A673 (cell line): ENCODE measurements at regions of chr4 and their contacts with region 1.

Region 1: GRCh38 chr4:78864405-78865024 is 74.7 kb downstream of the PAQR3 start:
- DNase-seq: peak; percentile 66
- H3K4me3 ChIP-seq: no peak overlapping the region
- H3K27ac ChIP-seq: no peak overlapping the region
- H3K4me1 ChIP-seq: no peaks in the 10 kb centered on the region
- H3K27me3 ChIP-seq: no peaks in the 10 kb centered on the region
- CTCF ChIP-seq: peak; percentile 63

Region 2: GRCh38 chr4:77827343-77827742 is 1037.2 kb before region 1 on chr4:
- CTCF ChIA-PET with region 1: no interaction called
- POLR2A ChIA-PET with region 1: no interaction called
- intact Hi-C with region 1: no loop called
- DNase-seq: no peak
- H3K4me3 ChIP-seq: no peak overlapping the region
- H3K27ac ChIP-seq: no peak overlapping the region
- H3K4me1 ChIP-seq: no peaks in the 10 kb centered on the region
- H3K27me3 ChIP-seq: no peaks in the 10 kb centered on the region
- CTCF ChIP-seq: no peak

Region 3: GRCh38 chr4:77959566-77960338 is 904.8 kb before region 1 on chr4:
- CTCF ChIA-PET with region 1: no interaction called
- POLR2A ChIA-PET with region 1: no interaction called
- intact Hi-C with region 1: loop called (anchors 5 kb)
- DNase-seq: peak; percentile 38
- H3K4me3 ChIP-seq: no peak overlapping the region
- H3K27ac ChIP-seq: no peak overlapping the region
- H3K4me1 ChIP-seq: no peaks in the 10 kb centered on the region
- H3K27me3 ChIP-seq: no peaks in the 10 kb centered on the region
- CTCF ChIP-seq: peak; percentile 55

Region 4: DNA sequence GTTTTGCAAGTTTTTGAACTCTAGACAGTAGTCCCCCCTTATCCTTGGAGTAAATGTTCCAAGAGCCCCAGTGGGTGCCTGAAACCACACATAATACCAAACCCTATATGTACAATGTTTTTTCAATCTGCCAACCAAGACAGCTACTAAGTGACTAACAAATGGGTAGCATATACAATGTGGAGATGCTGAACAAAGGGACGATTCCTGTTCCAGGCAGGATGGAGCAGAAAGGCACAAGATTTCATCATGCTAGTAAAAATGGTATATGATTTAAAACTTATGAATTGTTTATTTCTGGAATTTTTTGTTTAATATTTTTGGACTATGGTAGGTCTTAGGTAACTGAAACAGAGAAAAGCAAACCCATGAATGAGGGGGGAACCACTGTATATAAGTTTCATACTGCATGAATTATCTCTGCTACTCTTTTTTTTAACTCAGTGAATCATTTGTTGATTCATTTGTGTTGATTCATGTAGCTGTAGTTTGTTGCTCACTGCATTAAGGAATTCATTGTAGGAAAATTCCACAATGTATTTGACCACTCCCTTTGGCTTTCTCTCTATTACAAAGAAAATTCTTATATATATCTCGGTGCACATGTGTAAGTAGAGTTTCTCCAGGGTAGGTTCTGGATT is 334.8 kb before region 1 on chr4:
- CTCF ChIA-PET with region 1: no interaction called
- POLR2A ChIA-PET with region 1: no interaction called
- intact Hi-C with region 1: loop called (anchors 10 kb)
- DNase-seq: no peak
- H3K4me3 ChIP-seq: no peak overlapping the region
- H3K27ac ChIP-seq: no peak overlapping the region
- H3K4me1 ChIP-seq: no peaks in the 10 kb centered on the region
- H3K27me3 ChIP-seq: no peaks in the 10 kb centered on the region
- CTCF ChIP-seq: no peak

Region 5: DNA sequence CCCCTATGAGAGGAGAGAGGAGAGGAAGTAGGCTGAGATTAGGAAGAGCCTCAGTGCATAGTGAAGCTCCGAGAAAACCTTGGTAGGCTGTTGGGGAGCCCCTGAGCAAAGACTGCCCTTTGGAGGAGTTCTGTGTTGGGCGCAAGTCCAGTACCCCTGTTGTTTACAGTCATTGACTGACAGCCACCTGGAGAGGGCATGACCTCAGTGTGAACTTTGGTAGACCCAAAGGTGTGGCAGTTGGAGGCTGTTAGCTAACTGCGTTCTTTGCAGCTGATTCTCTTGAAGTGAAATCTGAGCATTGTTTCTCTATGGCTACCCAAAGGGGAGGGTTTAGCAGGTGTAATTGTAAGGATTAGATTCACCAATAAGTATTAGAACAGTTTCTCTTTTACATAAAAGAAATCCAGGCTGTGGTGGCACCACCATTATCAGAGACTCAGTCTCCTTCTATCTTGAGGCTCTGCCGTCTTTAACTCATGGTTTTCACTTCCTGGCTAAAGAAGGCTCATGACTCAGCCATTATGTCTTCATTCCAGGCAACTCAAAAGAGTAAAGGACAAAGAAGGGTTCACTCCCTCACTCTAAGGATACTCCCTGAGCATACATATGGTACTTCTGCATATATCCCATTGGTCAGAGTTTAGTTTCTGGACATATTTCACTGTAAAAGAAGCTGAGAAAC is 279.5 kb before region 1 on chr4:
- CTCF ChIA-PET with region 1: no interaction called
- POLR2A ChIA-PET with region 1: no interaction called
- intact Hi-C with region 1: no loop called
- DNase-seq: no peak
- H3K4me3 ChIP-seq: no peak overlapping the region
- H3K27ac ChIP-seq: no peak overlapping the region
- H3K4me1 ChIP-seq: peaks cover 8% of the 10 kb centered on the region
- H3K27me3 ChIP-seq: no peaks in the 10 kb centered on the region
- CTCF ChIP-seq: no peak

Region 6: DNA sequence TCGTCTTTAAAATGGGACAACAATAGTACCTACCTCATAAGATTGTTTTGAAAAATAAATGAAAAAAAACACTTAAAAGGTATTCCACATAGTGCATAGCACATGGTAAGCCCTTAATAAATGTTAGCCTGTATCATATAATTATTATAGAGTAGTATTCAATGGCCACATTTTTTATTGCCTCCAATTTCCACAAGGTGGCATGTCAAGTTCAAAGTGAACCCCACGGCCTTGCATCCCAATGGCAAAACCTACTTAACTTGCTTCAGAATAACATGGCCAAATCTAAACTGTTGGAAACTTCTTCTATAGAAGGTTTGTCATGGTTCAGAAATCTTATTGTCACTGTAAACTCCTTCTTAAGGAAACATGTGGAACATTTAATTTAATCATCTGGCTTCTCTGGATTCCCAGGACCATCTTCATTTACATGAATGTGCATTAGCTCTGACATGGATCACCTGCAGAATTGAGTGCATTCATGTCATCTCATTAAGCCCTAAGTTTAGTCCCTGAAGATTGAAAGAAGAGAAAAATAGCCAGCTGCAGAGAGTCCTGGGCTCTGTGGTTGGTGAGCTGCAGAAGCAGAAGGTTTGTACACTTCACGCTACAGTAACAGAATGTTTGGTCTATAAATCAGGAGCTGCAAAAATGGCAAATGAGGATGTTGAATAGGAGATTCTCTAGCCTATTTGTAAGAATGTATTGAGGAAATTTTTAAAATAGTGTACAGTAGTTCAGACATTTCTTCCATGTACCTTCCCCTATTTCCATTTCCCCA is 251.9 kb before region 1 on chr4:
- CTCF ChIA-PET with region 1: interaction called, 3 read pairs
- POLR2A ChIA-PET with region 1: no interaction called
- intact Hi-C with region 1: loop called (anchors 5 kb)
- DNase-seq: peak; percentile 46
- H3K4me3 ChIP-seq: no peak overlapping the region
- H3K27ac ChIP-seq: no peak overlapping the region
- H3K4me1 ChIP-seq: peaks cover 14% of the 10 kb centered on the region
- H3K27me3 ChIP-seq: no peaks in the 10 kb centered on the region
- CTCF ChIP-seq: peak; percentile 47

Region 7: GRCh38 chr4:78644744-78645330 is 219.7 kb before region 1 on chr4:
- CTCF ChIA-PET with region 1: no interaction called
- POLR2A ChIA-PET with region 1: no interaction called
- intact Hi-C with region 1: loop called (anchors 10 kb)
- DNase-seq: peak; percentile 67
- H3K4me3 ChIP-seq: no peak overlapping the region
- H3K27ac ChIP-seq: peak overlapping the region; percentile 84
- H3K4me1 ChIP-seq: peaks cover 22% of the 10 kb centered on the region
- H3K27me3 ChIP-seq: no peaks in the 10 kb centered on the region
- CTCF ChIP-seq: peak; percentile 60

Region 8: DNA sequence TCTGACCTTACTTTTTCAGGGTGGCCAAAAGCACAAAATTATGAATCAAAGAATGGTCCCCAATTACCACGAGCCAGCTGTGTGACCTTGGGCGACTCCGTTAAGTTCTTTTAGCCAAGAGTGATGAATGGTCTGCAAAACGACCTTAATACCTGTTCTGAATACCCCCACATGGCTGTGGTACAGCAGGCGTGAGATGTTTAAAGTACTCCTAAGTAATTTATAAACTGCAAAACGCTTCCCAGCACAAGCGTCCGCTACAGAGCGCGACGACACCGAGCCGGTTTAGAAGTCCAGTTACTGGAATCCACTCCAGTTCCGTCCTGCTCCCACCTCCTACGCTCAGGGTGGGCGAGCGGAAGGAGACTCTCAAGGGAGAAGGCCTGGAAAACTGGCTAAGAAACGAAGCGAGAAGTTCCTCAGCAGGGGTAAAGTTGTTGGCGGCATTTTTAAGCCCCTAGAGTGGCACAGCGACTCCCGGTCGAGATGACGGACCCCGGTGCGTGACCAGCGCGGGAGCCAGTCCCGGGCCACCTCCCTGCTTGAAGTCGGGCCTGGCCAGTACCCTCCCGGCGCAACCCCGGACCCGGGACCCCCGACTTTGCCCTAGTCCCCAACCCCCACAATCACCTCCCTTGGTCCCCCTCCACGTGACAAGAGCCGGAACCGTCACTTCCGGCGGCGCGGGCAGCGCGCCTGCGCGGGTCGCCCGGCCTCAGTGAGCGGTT is 89.0 kb before region 1 on chr4:
- CTCF ChIA-PET with region 1: no interaction called
- POLR2A ChIA-PET with region 1: no interaction called
- intact Hi-C with region 1: loop called (anchors 5 kb)
- DNase-seq: peak; percentile 78
- H3K4me3 ChIP-seq: peak overlapping the region; percentile 69
- H3K27ac ChIP-seq: peak overlapping the region; percentile 92
- H3K4me1 ChIP-seq: peaks cover 13% of the 10 kb centered on the region
- H3K27me3 ChIP-seq: no peaks in the 10 kb centered on the region
- CTCF ChIP-seq: no peak